Motor neuron (in vitro differentiated cells): ENCODE measurements at regions of chr14 and their contacts with region 1.

Region 1: DNA sequence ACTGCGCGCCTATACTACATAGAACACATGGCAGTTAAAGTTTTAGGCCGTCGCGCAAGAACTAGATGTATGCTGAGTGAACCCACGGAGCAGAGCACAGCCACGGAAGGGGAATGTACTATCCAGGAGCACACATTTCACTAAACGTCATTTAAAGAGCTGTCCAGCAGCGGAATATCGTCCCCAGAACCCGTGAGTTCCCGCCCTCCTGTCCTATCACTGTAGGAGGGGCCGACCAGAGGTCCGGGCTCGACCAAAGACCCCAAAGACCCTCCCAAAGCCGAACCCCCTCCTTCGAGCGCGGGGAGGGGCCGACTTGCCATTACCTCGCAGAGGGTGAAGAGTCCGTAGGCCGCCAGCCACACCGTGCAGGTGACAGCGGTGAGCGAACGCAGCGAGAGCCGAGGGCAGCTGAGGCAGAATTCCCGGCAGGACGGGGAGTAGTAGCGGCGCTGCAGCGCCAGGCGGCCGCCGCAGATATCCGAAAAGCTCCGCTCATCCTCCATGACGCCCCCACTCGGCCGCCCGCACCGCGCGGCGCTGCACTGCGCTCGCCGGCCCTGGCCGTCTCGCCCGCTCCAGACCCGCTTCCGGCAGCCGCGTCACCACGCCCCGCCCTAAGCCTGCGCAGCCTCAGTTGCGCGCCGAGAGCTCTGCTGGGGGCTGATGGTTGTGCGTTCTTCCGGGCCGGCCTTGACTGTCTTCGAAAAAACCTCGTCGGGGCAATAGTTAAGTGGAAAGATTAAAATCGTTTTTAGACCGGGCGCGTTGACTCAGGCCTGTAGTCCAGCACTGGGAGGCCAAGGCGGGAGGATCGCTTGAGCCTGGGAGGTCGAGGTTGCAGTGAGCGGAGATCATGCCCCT is at the start of gene PIGH:
- ATAC-seq: peak; percentile 94 to 99 (median 98)
- H3K4me3 ChIP-seq: peak within 1 kb of the TSS; percentile 49 to 97 (median 81)
- H3K27ac ChIP-seq: peak within 1 kb of the TSS; percentile 56 to 80
- H3K4me1 ChIP-seq: peaks cover 3 to 10% of the 10 kb centered on the region in 2 donors
- total RNA-seq, gene PIGH: 14.1 to 39.2 (median 28.4) TPM

Region 2: GRCh38 chr14:67018720-67019119 is 581.2 kb before region 1 on chr14:
- in situ Hi-C with region 1: no loop called
- ATAC-seq: no peak
- H3K4me3 ChIP-seq: no peak overlapping the region
- H3K27ac ChIP-seq: no peak overlapping the region
- H3K4me1 ChIP-seq: no peaks in the 10 kb centered on the region

Region 3: DNA sequence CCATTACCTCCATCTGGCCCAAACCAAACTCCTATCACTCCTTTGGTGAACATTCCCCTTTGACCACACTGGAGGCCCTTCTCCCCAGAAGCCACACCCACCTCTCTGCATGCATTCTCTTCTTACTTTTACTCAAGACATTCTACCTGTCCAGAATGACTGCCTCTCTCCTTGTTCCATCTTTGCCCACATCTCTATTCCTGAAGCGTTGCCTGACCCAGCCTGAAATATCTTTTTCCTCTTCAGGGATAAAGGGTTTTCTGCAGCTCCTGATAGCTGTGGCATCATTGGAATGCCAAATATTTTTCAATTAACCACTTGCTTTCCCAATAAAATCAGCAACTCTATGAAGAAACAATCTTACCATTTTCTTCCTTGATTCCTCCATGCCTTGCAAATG is 203.4 kb before region 1 on chr14:
- in situ Hi-C with region 1: no loop called
- ATAC-seq: no peak
- H3K4me3 ChIP-seq: no peak overlapping the region
- H3K27ac ChIP-seq: no peak overlapping the region
- H3K4me1 ChIP-seq: no peaks in the 10 kb centered on the region

Region 4: DNA sequence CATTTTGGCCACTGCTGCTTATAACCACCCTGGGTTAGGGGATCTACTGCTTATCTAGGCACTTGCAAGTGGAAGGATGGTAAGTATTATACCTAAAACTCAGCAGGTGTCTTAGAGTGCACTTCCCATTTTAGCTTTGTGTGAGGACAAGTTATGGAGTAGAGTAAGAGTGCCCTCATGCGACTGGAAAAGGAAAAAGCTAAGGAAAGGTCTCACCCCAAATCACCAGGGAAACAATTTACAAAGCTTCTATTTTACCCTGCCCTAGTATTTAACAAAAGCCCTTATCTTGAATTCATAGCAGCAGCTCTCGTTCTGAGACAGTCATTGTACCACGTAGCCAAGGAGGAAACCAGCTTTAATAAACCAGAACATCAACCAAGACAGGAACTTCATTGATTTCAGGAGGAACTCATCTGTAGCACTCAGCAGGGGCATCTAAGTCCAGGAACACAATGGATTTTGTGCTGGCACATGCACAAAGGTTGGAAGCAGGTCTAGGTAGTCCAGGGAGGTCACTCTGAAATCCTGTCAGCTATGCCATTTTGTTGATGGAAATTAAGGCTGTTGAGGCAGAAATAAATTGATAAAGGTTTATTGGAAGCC is 104.7 kb after region 1 on chr14:
- in situ Hi-C with region 1: loop called in 1 of 9 experiments (anchors 25 kb)
- ATAC-seq: peak; percentile 62 to 91 (median 81)
- H3K4me3 ChIP-seq: no peak overlapping the region
- H3K27ac ChIP-seq: no peak overlapping the region
- H3K4me1 ChIP-seq: peaks cover 0 to 3% of the 10 kb centered on the region in 2 donors

Region 5: GRCh38 chr14:67766172-67766680 is 166.3 kb after region 1 on chr14:
- in situ Hi-C with region 1: no loop called
- ATAC-seq: no peak
- H3K4me3 ChIP-seq: no peak overlapping the region
- H3K27ac ChIP-seq: no peak overlapping the region
- H3K4me1 ChIP-seq: no peaks in the 10 kb centered on the region

Region 6: GRCh38 chr14:67831113-67831512 is 231.2 kb after region 1 on chr14:
- in situ Hi-C with region 1: no loop called
- ATAC-seq: no peak
- H3K4me3 ChIP-seq: no peak overlapping the region
- H3K27ac ChIP-seq: no peak overlapping the region
- H3K4me1 ChIP-seq: no peaks in the 10 kb centered on the region